B cell (primary cell): ENCODE measurements at regions of chr1 and their contacts with region 1.

Region 1: DNA sequence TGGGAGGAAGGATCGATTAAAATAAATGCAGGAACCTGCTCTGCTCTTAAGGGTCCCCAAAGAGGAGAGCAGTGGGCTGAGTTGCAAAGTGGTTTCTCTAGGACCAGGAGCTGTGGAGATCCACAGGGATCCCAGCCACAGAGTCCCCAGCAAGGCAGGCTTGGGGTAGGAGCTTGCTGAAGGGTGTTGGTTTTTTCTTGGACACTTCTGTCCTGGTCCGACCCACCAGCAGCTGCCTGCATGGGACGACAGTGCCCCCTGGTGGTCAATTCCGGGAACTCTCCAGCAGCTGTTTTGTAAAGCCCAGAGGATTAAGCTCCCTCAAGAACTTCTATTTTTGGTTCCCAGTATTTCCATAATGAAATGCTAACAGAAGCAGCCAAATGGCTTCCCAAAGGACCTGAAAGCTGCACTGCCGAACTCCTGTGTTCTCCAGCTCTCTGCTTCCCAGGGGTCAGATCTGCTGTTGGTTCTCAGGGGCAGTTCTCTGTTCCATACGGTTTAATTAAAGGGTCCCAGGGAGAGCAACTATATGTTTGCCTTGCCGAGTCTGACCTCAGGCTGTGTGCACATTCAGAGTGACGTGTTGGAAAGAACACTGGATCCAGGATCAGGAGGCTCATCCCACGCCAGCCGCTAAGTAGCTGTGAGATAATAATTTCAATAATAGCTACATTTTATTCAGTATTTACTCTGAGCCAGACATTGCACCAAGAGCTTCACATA is 23.2 kb downstream of the NENF start:
- DNase-seq: peak; percentile 84
- ATAC-seq: peak; percentile 85
- H3K4me3 ChIP-seq: no peak overlapping the region
- H3K4me3 Mint-ChIP-seq: no peak overlapping the region
- H3K27ac ChIP-seq: no peak overlapping the region
- H3K27ac Mint-ChIP-seq: no peak overlapping the region
- H3K4me1 ChIP-seq: peaks cover 0 to 6% of the 10 kb centered on the region in 2 donors
- H3K4me1 Mint-ChIP-seq: no peaks in the 10 kb centered on the region
- H3K27me3 ChIP-seq: peaks cover 0 to 4% (median 0%) of the 10 kb centered on the region in 4 experiments
- H3K27me3 Mint-ChIP-seq: no peaks in the 10 kb centered on the region
- CTCF ChIP-seq: peak; percentile 99

Region 2: DNA sequence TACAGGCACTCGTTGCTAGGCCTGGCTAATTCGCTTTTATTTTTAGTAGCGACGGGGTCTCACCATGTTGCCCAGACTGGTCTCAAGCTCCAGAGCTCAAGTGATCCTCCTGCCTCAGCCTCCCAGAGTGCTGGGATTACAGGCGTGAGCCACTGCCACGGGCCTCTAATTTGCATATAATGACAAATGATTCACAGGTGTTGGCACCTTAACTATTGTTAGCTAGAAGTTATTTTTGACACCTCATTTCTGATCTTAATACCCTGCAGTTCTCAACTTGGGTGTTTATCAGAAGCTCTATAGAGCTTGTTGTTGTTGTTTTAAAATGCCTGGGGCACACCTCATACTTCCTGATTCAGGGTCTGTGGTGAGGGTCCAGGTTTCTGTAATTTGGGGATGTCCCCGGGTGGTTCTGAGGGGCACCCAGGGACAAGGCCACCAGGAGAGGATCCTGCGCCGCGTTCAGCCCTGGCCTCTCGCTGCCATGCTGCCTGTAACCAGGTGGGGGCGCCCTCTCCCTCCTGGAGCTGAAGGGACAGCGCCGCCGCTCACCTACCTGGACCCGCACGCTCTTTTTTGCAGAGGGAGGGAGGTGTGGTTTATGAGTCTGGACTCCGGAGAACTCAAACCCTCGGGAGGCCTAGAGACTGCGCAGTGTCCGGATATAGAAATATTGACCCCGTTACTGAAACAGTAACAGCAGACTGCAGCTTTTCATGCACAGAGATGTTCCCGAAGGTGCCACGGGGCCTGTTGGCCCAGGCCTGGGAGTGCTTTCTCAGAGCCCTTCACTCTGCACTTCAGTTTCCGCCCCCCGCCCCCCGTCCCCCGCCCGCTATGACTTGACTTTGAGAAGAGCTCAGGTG is 757.6 kb before region 1 on chr1:
- CTCF ChIA-PET with region 1: interaction called, 12 read pairs
- POLR2A ChIA-PET with region 1: no interaction called
- intact Hi-C with region 1: no loop called
- DNase-seq: peak; percentile 76
- ATAC-seq: peak; percentile 45
- H3K4me3 ChIP-seq: peak overlapping the region in 3 of 5 experiments; percentile 21 to 44 (median 34)
- H3K4me3 Mint-ChIP-seq: peak overlapping the region; percentile 76
- H3K27ac ChIP-seq: peak overlapping the region in 1 of 2 donors; percentile 11
- H3K27ac Mint-ChIP-seq: peak overlapping the region; percentile 59
- H3K4me1 ChIP-seq: peaks cover 44 to 52% of the 10 kb centered on the region in 2 donors
- H3K4me1 Mint-ChIP-seq: peaks cover 53% of the 10 kb centered on the region
- H3K27me3 ChIP-seq: peaks cover 0 to 5% (median 0%) of the 10 kb centered on the region in 4 experiments
- H3K27me3 Mint-ChIP-seq: peaks cover 5% of the 10 kb centered on the region
- CTCF ChIP-seq: peak; percentile 97

Region 3: GRCh38 chr1:212062832-212063438 is 393.0 kb before region 1 on chr1:
- CTCF ChIA-PET with region 1: interaction called, 185 read pairs
- POLR2A ChIA-PET with region 1: interaction called, 9 read pairs
- intact Hi-C with region 1: loop called (anchors 1 kb)
- DNase-seq: peak; percentile 56
- ATAC-seq: no peak
- H3K4me3 ChIP-seq: no peak overlapping the region
- H3K4me3 Mint-ChIP-seq: no peak overlapping the region
- H3K27ac ChIP-seq: no peak overlapping the region
- H3K27ac Mint-ChIP-seq: no peak overlapping the region
- H3K4me1 ChIP-seq: no peaks in the 10 kb centered on the region
- H3K4me1 Mint-ChIP-seq: no peaks in the 10 kb centered on the region
- H3K27me3 ChIP-seq: no peaks in the 10 kb centered on the region
- H3K27me3 Mint-ChIP-seq: no peaks in the 10 kb centered on the region
- CTCF ChIP-seq: peak; percentile 95

Region 4: DNA sequence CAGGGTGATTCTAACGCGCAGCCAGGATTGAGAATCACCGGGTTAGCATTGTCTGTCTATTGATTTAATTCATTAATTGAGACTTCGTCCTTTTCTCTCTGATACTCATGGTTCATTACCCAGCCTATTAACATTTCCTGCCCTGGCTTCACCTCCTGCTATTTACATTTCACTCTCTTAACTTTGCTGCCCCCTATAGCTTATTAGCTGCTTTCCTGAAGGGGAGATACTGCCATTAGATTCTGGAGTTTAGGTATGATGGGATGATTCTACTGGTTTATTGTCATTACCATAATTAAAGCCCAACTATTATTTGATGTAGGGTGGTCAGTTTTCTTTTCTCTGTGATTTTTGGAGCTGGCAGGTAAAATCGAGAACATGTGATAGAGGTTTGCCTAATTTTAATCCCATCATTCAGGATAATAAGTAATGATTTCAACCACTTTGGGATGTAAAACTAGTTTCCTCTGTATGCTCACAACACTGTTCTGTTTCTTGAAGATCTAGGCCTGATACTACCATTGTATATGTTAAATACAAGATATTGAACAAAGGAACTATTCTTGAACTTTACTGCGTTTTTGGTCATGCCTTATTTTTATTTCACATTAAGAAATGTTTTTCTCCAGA is 164.3 kb before region 1 on chr1:
- CTCF ChIA-PET with region 1: interaction called, 37 read pairs
- POLR2A ChIA-PET with region 1: no interaction called
- intact Hi-C with region 1: loop called (anchors 1 kb)
- DNase-seq: peak; percentile 78
- ATAC-seq: peak; percentile 87
- H3K4me3 ChIP-seq: no peak overlapping the region
- H3K4me3 Mint-ChIP-seq: peak overlapping the region; percentile 21
- H3K27ac ChIP-seq: no peak overlapping the region
- H3K27ac Mint-ChIP-seq: peak overlapping the region; percentile 46
- H3K4me1 ChIP-seq: peaks cover 29 to 61% of the 10 kb centered on the region in 2 donors
- H3K4me1 Mint-ChIP-seq: peaks cover 77% of the 10 kb centered on the region
- H3K27me3 ChIP-seq: no peaks in the 10 kb centered on the region
- H3K27me3 Mint-ChIP-seq: no peaks in the 10 kb centered on the region
- CTCF ChIP-seq: peak; percentile 82

Region 5: GRCh38 chr1:212381397-212382035 is 74.5 kb before region 1 on chr1:
- CTCF ChIA-PET with region 1: interaction called, 10 read pairs
- POLR2A ChIA-PET with region 1: no interaction called
- intact Hi-C with region 1: no loop called
- DNase-seq: no peak
- ATAC-seq: no peak
- H3K4me3 ChIP-seq: no peak overlapping the region
- H3K4me3 Mint-ChIP-seq: no peak overlapping the region
- H3K27ac ChIP-seq: no peak overlapping the region
- H3K27ac Mint-ChIP-seq: no peak overlapping the region
- H3K4me1 ChIP-seq: no peaks in the 10 kb centered on the region
- H3K4me1 Mint-ChIP-seq: no peaks in the 10 kb centered on the region
- H3K27me3 ChIP-seq: no peaks in the 10 kb centered on the region
- H3K27me3 Mint-ChIP-seq: no peaks in the 10 kb centered on the region
- CTCF ChIP-seq: no peak

Region 6: GRCh38 chr1:212477014-212477679 is 21.2 kb after region 1 on chr1:
- CTCF ChIA-PET with region 1: interaction called, 16 read pairs
- POLR2A ChIA-PET with region 1: no interaction called
- intact Hi-C with region 1: no loop called
- DNase-seq: peak; percentile 85
- ATAC-seq: peak; percentile 94
- H3K4me3 ChIP-seq: no peak overlapping the region
- H3K4me3 Mint-ChIP-seq: no peak overlapping the region
- H3K27ac ChIP-seq: no peak overlapping the region
- H3K27ac Mint-ChIP-seq: no peak overlapping the region
- H3K4me1 ChIP-seq: peaks cover 4 to 7% of the 10 kb centered on the region in 2 donors
- H3K4me1 Mint-ChIP-seq: peaks cover 6% of the 10 kb centered on the region
- H3K27me3 ChIP-seq: no peaks in the 10 kb centered on the region
- H3K27me3 Mint-ChIP-seq: peaks cover 22% of the 10 kb centered on the region
- CTCF ChIP-seq: peak; percentile 87

Region 7: DNA sequence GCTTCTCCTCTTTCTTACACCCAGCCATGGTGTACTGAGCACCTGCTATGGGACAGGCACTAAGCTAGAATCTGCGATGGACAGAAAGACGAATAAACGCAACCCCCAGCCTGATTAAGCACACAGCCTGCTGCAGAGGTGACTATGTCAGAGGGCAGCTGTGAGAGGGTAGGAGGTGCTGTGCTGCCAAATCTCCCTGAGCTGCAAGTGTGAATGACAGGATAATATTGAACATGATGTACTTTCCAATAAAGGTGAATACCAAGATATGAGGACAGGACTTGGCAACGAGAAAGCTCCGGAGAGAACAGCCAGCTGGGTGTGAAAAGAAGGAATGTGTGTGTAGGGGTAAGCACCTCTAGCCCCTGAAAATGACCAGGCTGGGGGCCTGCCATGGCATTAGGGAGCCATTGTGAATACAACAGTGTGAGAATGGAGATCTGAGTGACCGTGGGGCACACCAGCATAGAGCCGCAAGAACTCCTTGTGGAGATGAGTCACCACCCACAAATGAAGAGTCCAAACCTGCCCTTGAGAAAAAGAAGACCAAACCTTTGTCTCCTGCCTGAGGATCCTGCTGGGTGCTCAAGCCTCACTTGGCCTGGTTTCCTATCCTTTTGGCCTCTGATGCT is 69.6 kb after region 1 on chr1:
- CTCF ChIA-PET with region 1: no interaction called
- POLR2A ChIA-PET with region 1: no interaction called
- intact Hi-C with region 1: no loop called
- DNase-seq: no peak
- ATAC-seq: no peak
- H3K4me3 ChIP-seq: no peak overlapping the region
- H3K4me3 Mint-ChIP-seq: no peak overlapping the region
- H3K27ac ChIP-seq: no peak overlapping the region
- H3K27ac Mint-ChIP-seq: no peak overlapping the region
- H3K4me1 ChIP-seq: no peaks in the 10 kb centered on the region
- H3K4me1 Mint-ChIP-seq: no peaks in the 10 kb centered on the region
- H3K27me3 ChIP-seq: peaks cover 0 to 3% (median 0%) of the 10 kb centered on the region in 4 experiments
- H3K27me3 Mint-ChIP-seq: peaks cover 21% of the 10 kb centered on the region
- CTCF ChIP-seq: no peak

Region 8: DNA sequence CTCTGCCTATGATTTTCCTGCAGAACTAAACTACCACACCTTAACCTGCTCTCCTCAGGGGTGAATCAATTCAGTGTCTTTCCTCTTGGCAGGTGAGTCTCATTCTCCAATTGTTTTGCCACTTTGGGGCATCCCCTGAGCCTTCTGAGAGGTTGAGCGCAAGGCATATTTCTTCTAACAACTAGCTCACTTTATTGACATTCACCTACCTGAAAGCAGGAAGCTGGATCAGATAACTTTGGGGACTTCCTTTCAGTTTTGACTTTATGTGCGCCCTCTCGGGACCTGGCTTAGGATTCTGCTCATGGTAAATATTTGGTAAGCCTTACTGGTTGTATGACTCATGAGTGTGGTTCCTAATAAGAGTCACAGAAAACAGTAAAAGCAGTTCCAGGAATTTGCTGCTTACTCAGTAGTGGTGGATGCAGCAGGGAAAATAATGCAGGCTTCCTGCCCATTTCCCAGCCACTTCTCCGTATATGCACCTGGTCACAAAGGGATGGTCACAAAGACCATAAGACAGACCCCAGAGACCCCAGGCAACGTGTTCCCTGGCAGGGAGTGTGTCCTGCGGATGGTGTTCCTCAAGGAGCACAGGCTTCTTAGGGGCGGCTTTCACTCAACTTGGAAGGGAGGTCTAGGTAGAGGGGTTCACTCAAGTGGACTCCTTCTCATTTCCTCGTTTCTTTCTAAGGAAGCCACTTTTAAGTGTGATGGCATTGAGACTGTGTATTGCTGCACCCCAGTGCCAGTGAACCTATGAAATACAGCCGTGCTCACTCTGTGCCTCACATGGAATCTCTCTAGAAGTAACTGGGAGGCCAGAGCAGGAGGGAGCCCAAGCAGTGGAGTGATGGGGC is 265.7 kb after region 1 on chr1:
- CTCF ChIA-PET with region 1: no interaction called
- POLR2A ChIA-PET with region 1: no interaction called
- intact Hi-C with region 1: no loop called
- DNase-seq: no peak
- ATAC-seq: no peak
- H3K4me3 ChIP-seq: no peak overlapping the region
- H3K4me3 Mint-ChIP-seq: no peak overlapping the region
- H3K27ac ChIP-seq: no peak overlapping the region
- H3K27ac Mint-ChIP-seq: no peak overlapping the region
- H3K4me1 ChIP-seq: no peaks in the 10 kb centered on the region
- H3K4me1 Mint-ChIP-seq: no peaks in the 10 kb centered on the region
- H3K27me3 ChIP-seq: no peaks in the 10 kb centered on the region
- H3K27me3 Mint-ChIP-seq: peaks cover 6% of the 10 kb centered on the region
- CTCF ChIP-seq: no peak

Region 9: DNA sequence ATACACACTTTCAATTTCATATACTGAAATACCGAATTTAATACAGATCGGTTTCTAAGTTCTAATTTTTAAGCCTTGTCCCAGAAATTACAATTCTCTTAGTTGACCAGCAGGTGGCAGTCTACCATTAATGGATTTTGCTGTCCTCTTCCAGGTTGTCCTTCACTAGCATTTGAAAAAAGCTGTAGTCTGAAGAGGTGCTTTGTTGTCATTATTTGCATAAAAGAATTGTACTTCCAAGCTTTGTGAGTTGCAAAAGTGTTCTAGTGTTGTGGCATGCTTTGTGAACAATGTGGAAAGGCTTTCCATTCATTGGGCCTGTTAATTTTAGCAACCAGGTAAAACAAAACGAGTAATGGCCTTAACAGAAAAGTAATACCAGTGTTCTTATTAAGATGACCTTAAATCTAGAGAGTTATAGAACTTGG is 788.7 kb after region 1 on chr1:
- CTCF ChIA-PET with region 1: no interaction called
- POLR2A ChIA-PET with region 1: no interaction called
- intact Hi-C with region 1: no loop called
- DNase-seq: peak; percentile 50
- ATAC-seq: no peak
- H3K4me3 ChIP-seq: no peak overlapping the region
- H3K4me3 Mint-ChIP-seq: no peak overlapping the region
- H3K27ac ChIP-seq: no peak overlapping the region
- H3K27ac Mint-ChIP-seq: no peak overlapping the region
- H3K4me1 ChIP-seq: no peaks in the 10 kb centered on the region
- H3K4me1 Mint-ChIP-seq: no peaks in the 10 kb centered on the region
- H3K27me3 ChIP-seq: no peaks in the 10 kb centered on the region
- H3K27me3 Mint-ChIP-seq: no peaks in the 10 kb centered on the region
- CTCF ChIP-seq: peak; percentile 99